ENCODE measurements at regions of chr7 and their contacts with region 1.

Region 1: GRCh38 chr7:111561885-111562732 is at the start of gene IMMP2L:
- DNase-seq: peak; percentile 87
- ATAC-seq: peak; percentile 89
- H3K4me3 ChIP-seq: peak within 1 kb of the TSS; percentile 81
- H3K27ac ChIP-seq: peak within 1 kb of the TSS; percentile 84
- H3K4me1 ChIP-seq: peaks cover 42% of the 10 kb centered on the region
- H3K27me3 ChIP-seq: no peaks in the 10 kb centered on the region
- CTCF ChIP-seq: peak; percentile 44; the same call in 1 of the 2 replicates
- total RNA-seq, gene IMMP2L: 8.6 and 15.4 TPM in 2 replicates

Region 2: GRCh38 chr7:110470420-110470819 is 1091.7 kb before region 1 on chr7:
- CTCF ChIA-PET with region 1: no interaction called
- POLR2A ChIA-PET with region 1: no interaction called
- intact Hi-C with region 1: no loop called
- DNase-seq: no peak
- ATAC-seq: no peak
- H3K4me3 ChIP-seq: no peak overlapping the region
- H3K27ac ChIP-seq: no peak overlapping the region
- H3K4me1 ChIP-seq: no peaks in the 10 kb centered on the region
- H3K27me3 ChIP-seq: no peaks in the 10 kb centered on the region
- CTCF ChIP-seq: no peak

Region 3: GRCh38 chr7:111098011-111098925 is 463.8 kb before region 1 on chr7:
- CTCF ChIA-PET with region 1: no interaction called
- POLR2A ChIA-PET with region 1: no interaction called
- intact Hi-C with region 1: loop called (anchors 10 kb)
- DNase-seq: peak; percentile 73
- ATAC-seq: peak; percentile 86
- H3K4me3 ChIP-seq: peak overlapping the region; percentile 41; the same call in 1 of the 2 replicates
- H3K27ac ChIP-seq: peak overlapping the region; percentile 95
- H3K4me1 ChIP-seq: peaks cover 30% of the 10 kb centered on the region
- H3K27me3 ChIP-seq: no peaks in the 10 kb centered on the region
- CTCF ChIP-seq: peak; percentile 86

Region 4: DNA sequence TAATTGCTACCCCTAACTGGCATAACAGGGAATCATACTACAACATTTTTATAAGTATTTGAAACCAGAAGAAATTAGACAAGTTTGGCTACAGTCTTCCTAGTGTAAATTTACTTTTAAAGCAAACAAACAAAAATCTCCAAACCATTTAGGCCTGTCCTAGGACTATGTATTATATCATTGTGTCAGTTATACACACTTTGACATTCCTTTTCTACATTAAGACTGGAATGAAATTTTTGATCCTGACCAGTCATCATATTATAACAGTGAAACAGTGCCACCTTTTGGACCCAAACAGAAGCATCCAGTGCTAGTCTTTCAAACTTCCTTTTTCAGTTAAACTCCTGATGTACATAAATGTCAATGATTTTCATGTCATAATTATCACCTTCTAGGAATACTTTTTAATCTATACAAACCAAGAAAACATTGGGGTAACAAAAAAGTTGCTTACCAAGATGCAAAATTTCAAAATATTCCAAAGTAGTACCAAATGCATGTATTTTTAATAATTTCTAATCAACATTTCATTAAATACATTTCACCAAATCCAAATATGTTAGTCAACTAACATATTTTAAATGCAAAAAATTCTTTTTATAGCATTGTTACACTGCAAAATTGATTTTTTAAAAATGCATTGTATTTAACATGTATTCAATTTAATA is 75.5 kb before region 1 on chr7:
- CTCF ChIA-PET with region 1: no interaction called
- POLR2A ChIA-PET with region 1: no interaction called
- intact Hi-C with region 1: loop called (anchors 1 kb)
- DNase-seq: peak; percentile 74
- ATAC-seq: peak; percentile 75
- H3K4me3 ChIP-seq: no peak overlapping the region
- H3K27ac ChIP-seq: peak overlapping the region; percentile 87
- H3K4me1 ChIP-seq: peaks cover 24% of the 10 kb centered on the region
- H3K27me3 ChIP-seq: no peaks in the 10 kb centered on the region
- CTCF ChIP-seq: peak; percentile 82

Region 5: DNA sequence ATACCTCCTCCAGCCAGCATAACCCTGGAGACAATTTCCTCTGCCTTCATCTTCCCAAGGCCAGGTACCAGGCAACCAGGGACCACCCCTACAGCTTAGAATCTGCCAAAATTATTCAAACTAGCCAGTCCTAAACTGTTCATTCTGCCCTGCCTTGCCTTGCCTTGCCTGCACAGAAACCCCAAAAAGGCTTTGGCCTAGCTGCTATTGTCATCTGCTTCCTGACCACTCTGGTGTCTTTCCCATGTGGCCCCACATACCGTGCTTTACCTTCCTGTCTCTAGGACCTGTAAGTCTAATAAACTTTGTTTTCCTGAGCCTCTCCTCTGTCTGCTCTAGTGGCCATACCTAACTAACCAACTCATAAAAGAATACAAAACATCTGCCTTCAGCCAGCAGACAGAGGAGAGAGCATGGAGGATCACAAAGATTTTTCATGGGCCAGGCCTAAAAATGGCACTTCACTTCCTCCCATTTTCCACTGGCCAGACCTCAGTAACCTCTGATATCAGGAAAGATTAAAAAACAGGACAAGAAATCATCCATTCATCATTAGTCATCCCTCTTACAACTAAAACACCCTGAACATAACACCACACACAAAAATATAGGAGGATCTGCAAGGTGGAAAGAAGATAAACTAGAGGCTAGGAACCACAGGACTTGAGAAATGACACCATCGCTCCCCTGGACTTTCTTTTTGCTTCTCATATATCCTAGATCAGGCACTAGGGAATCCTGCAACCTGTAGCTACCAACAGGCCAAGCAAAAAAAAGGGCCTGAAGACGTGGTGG is 51.3 kb before region 1 on chr7:
- CTCF ChIA-PET with region 1: no interaction called
- POLR2A ChIA-PET with region 1: interaction called, 10 read pairs
- intact Hi-C with region 1: loop called (anchors 5 kb)
- DNase-seq: peak; percentile 35
- ATAC-seq: peak; percentile 36
- H3K4me3 ChIP-seq: no peak overlapping the region
- H3K27ac ChIP-seq: peak overlapping the region; percentile 96
- H3K4me1 ChIP-seq: peaks cover 50% of the 10 kb centered on the region
- H3K27me3 ChIP-seq: no peaks in the 10 kb centered on the region
- CTCF ChIP-seq: no peak

Region 6: DNA sequence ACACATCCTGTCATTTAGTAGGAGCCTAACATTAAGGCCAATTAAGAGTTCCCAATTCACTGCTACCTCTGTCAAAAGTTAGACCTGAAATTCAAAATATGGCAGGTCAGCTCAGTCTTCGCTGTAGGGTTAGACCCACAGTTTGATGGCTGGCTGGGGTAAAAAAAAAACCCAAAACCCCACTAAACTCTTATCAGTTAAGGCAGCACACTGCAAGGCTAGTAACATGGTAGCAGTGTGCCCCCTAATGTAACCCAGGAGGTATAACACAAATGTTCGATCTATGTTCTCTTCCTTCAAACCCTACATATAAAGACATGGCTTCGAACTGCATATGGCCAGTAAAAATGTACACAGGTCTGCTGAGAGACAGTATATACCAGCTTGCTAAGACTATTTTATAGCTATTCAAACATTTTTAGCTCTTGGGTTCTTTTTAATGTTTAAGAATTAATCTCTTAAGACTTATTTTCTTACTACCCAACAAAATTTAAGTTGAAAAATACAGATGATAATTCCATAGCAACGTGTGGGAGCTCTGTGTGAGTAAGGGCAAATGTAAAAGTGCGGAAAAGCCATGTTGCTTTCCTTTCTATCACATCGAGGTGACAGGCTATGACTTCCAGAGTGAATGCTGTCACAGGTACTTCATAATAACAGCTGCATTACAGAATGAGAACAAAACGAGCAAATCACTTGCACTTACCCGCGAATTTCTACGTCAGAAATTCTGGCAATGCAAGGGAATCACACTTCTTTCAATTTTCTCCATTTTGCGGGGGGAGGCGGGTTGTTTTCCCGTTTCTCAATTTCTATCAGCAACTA is 168.6 kb after region 1 on chr7:
- CTCF ChIA-PET with region 1: interaction called, 3 read pairs
- POLR2A ChIA-PET with region 1: no interaction called
- intact Hi-C with region 1: loop called (anchors 2 kb)
- DNase-seq: peak; percentile 58
- ATAC-seq: peak; percentile 85
- H3K4me3 ChIP-seq: no peak overlapping the region
- H3K27ac ChIP-seq: peak overlapping the region; percentile 31; the same call in 1 of the 2 replicates
- H3K4me1 ChIP-seq: peaks cover 3% of the 10 kb centered on the region; the same call in 1 of the 2 replicates
- H3K27me3 ChIP-seq: no peaks in the 10 kb centered on the region
- CTCF ChIP-seq: peak; percentile 76

Measured in PC-3 (cell line).